ENCODE measurements at regions of chr21 and their contacts with region 1.

Region 1: DNA sequence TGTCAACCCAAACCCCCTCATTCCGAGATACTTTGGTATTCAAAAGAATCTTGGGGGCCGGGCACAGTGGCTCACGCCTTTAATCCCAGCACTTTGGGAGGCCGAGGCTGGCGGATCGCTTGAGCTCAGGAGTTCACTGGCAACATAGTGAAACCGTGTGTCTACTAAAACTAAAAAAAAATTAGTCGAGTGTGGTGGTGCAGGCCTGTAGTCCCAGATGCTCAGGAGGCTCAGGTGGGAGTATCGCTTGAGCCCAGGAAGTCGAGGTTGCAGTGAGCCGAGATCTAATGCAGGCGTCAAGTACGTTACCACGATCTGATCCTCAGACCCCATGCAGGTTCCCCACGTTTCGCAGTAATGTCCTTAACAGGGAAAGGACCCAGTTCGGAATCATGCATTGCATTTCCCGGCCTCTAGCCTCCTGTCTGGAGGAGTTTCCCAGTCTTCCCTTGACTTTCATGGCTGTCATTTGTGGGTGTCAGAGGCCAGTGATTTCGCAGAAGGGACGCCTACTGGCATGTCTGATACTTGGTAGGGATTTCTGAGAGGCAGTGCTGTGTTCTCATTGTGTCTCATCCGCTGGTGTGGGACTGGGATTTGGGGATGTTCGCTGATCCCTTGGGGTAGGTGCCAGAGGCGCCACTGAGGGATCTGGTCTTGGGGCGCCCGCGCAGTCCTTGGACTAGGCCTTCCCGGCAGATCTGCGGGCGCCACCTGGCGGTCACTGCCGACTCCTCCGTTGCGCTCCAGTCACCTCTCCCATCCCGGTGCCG is 39.3 kb upstream of the HMGN1 start:
- DNase-seq: peak; percentile 96
- H3K4me3 ChIP-seq: peak overlapping the region; percentile 36
- H3K27ac ChIP-seq: peak overlapping the region; percentile 58
- H3K4me1 ChIP-seq: peaks cover 3% of the 10 kb centered on the region
- H3K27me3 ChIP-seq: no peaks in the 10 kb centered on the region
- CTCF ChIP-seq: peak; percentile 95

Region 2: GRCh38 chr21:39180429-39181019 is 207.7 kb before region 1 on chr21:
- intact Hi-C with region 1: loop called (anchors 2 kb)
- DNase-seq: no peak
- H3K4me3 ChIP-seq: no peak overlapping the region
- H3K27ac ChIP-seq: no peak overlapping the region
- H3K4me1 ChIP-seq: peaks cover 5% of the 10 kb centered on the region
- H3K27me3 ChIP-seq: no peaks in the 10 kb centered on the region
- CTCF ChIP-seq: no peak

Region 3: DNA sequence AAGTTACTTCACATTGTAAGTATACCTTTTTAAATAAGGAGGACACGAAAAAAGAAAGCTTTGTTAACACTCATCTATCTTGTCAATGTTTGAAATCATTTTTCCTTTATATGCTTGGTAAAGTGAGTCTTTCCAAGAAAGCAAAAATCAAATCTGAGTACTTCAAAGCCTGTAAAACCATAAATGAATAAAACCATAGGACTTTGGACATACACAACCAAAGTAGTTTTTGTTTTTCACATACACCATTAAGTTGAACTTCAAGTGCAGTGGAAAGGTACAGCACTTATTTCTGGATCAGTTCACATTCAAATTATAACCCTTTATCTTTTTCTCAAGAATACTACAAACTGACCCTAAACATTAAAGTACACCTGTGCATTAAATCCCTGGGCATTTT is 194.8 kb before region 1 on chr21:
- intact Hi-C with region 1: no loop called
- DNase-seq: no peak
- H3K4me3 ChIP-seq: no peak overlapping the region
- H3K27ac ChIP-seq: no peak overlapping the region
- H3K4me1 ChIP-seq: peaks cover 7% of the 10 kb centered on the region
- H3K27me3 ChIP-seq: no peaks in the 10 kb centered on the region
- CTCF ChIP-seq: no peak

Region 4: GRCh38 chr21:39531832-39532231 is 143.6 kb after region 1 on chr21:
- intact Hi-C with region 1: no loop called
- DNase-seq: no peak
- H3K4me3 ChIP-seq: no peak overlapping the region
- H3K27ac ChIP-seq: no peak overlapping the region
- H3K4me1 ChIP-seq: peaks cover 3% of the 10 kb centered on the region
- H3K27me3 ChIP-seq: no peaks in the 10 kb centered on the region
- CTCF ChIP-seq: no peak